Dorsolateral prefrontal cortex (tissue), 120 donors: ENCODE measurements at regions of chr2 and their contacts with region 1.

Region 1: GRCh38 chr2:128292599-128293425 is 25.9 kb downstream of the HS6ST1 start:
- DNase-seq: no peak
- H3K4me3 ChIP-seq: no peak overlapping the region
- H3K27ac ChIP-seq: peak overlapping the region in 35 of 59 donors; percentile 0 to 70 (median 49)
- H3K27me3 ChIP-seq: no peaks in the 10 kb centered on the region
- CTCF ChIP-seq: peak in 12 of 56 donors; percentile 13 to 56 (median 26)

Region 2: DNA sequence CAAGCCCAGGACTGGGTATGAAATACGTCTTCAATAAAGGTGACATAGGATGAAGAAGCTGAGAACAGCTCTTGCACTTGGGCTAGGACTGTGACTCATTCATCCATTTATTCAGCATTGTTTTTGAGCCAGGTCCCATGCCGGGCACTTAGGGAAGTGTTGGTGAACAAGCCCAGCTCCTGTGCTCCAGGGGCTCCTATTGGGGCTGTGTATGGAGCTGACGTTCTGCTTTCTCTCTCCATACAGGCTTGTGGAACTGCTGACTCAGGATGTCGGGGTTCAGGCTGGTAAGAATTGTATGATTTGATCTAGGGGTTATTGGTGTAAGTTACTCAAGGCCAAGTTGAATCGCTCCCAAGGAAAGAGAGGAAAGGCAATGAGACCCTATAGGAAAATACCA is 733.4 kb before region 1 on chr2:
- intact Hi-C with region 1: no loop called
- DNase-seq: no peak
- H3K4me3 ChIP-seq: no peak overlapping the region
- H3K27ac ChIP-seq: no peak overlapping the region
- H3K27me3 ChIP-seq: peaks cover 0 to 5% (median 0%) of the 10 kb centered on the region in 45 donors
- CTCF ChIP-seq: no peak

Region 3: DNA sequence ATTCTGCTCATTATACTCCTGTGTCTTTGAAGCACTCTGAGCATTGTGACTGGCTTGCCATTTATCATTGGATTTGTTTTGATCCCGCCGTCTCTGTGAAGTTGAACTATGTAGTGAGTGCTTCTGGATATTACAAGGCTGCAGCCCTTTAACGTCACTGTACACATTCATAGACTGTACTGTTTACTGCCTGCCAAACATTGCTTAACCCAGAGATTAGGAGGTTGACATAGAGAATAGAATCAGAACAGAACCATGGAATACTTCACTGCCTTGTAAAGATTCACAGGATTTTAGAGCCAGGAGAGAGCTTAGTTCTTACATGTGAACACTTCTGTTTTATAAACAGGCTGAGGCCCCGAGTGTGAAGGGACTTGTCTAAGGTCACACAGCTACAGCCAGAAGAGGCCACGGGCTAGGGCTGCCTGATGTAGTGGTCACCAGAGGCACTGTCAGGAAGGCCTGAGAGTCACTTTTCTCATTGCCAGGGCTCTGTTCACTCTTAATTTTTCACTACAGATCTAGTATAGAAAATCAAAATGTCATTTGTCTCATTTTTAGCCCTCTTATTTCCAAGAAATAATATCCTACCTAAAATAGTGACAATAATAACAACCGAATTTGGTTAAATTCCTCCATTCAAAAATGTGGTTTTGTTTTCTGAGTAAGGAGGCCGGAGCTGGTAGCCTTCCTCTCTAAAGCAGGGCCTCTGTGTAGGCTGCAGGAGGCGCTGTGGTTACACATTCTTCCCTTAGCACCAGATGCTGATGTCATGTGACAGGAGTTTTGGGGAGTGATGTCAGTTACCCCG is 114.0 kb before region 1 on chr2:
- intact Hi-C with region 1: loop called in 1 of 2 experiments (anchors 5 kb)
- DNase-seq: peak; percentile 38 to 79 (median 70)
- H3K4me3 ChIP-seq: peak overlapping the region in 5 of 59 donors; percentile 1 to 44 (median 14)
- H3K27ac ChIP-seq: peak overlapping the region in 11 of 59 donors; percentile 1 to 57 (median 47)
- H3K27me3 ChIP-seq: no peaks in the 10 kb centered on the region
- CTCF ChIP-seq: peak; percentile 53 to 97 (median 84)